A673 (cell line): ENCODE measurements at regions of chr10 and their contacts with region 1.

Region 1: DNA sequence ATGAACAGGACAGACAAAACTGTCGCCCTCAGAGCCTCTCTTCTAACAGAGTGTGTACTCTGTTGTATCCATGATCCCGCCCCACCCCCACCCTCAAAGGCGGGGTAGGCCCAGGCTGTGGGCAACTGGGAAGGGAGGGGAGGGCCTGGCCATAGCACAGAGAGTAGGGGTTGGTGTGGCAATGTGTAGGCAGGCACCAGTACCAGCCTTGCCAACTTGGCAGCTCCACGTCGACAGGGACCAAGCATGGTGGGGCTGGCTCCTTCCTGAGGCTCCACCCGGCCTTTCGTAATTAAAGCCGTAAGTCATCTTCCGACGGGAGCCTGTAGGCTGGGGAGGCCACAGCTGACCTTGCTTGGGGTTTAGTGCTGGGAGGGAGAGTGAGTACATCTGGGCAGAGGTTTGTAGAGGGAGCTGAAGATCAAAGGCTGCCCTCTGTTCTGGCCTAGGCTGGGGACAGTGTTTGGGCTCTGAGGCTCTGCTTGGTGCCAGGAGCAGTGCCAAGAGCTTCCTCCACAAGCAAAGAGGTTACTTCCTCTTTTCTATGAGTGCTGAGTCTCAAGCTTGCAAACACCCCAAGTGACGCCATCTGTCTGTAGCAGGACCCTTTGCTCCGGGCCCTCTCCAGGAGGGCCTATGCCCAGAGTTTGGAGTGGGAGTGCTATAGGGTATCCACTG is 121.6 kb downstream of the C10orf105 start:
- DNase-seq: no peak
- H3K4me3 ChIP-seq: no peak overlapping the region
- H3K27ac ChIP-seq: peak overlapping the region; percentile 16
- H3K4me1 ChIP-seq: peaks cover 11% of the 10 kb centered on the region
- H3K27me3 ChIP-seq: no peaks in the 10 kb centered on the region
- CTCF ChIP-seq: no peak

Region 2: GRCh38 chr10:71608819-71609768 is 11.1 kb after region 1 on chr10:
- CTCF ChIA-PET with region 1: no interaction called
- POLR2A ChIA-PET with region 1: interaction called, 13 read pairs
- intact Hi-C with region 1: no loop called
- DNase-seq: peak; percentile 78
- H3K4me3 ChIP-seq: no peak overlapping the region
- H3K27ac ChIP-seq: no peak overlapping the region
- H3K4me1 ChIP-seq: peaks cover 9% of the 10 kb centered on the region
- H3K27me3 ChIP-seq: no peaks in the 10 kb centered on the region
- CTCF ChIP-seq: peak; percentile 91